Breast epithelium (tissue), 4 donors: ENCODE measurements at regions of chr9 and their contacts with region 1.

Region 1: GRCh38 chr9:126587187-126588185 is 26.2 kb upstream of the LMX1B start:
- DNase-seq: peak; percentile 68 to 80
- H3K4me3 ChIP-seq: no peak overlapping the region
- H3K27ac ChIP-seq: peak overlapping the region; percentile 86 to 88
- H3K4me1 ChIP-seq: peaks cover 0 to under 1% of the 10 kb centered on the region in 2 donors
- H3K27me3 ChIP-seq: no peaks in the 10 kb centered on the region
- CTCF ChIP-seq: no peak
- POLR2A ChIP-seq: no peak

Region 2: DNA sequence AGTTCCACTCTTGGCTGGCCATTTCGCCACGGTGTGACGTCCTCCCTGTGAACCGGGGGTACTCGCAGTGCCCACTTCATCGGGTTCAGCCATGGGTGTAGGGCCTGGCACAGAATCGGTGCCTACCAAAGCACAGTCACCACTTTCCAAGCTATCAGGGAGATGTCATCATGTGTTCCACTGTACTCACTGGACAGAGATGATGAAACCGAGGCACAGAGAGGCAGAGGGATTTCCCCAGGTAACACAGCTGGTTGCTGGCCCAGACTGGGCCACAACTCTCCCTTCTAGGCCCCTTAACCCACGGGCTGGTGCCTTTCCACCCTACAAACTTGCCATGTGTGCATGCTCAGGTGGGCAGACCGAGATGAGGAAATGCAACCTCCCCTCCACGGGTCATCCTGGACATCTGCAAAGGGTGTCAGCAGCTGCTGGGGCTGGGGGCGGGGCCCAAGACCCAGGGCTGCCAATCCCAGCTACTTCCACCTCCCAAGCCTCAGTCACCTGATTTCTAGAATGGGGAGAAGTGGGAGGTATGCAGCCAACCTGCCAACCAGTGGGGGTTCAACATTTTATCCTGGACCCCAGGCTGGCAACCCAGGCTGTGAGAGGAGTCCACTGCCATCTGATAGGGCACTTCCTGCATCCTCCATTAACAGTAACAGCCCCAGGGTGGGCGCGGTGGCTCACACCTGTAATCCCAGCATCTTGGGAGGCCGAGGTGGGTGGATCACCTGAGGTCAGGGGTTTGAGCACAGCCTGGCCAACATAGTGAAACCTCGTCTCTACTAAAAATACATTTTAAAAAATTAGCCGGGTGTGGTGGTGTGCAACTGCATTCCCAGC is 1191.9 kb after region 1 on chr9:
- intact Hi-C with region 1: loop called (anchors 5 kb)
- DNase-seq: no peak
- H3K4me3 ChIP-seq: no peak overlapping the region
- H3K27ac ChIP-seq: peak overlapping the region in 1 of 2 donors; percentile 82
- H3K4me1 ChIP-seq: no peaks in the 10 kb centered on the region
- H3K27me3 ChIP-seq: no peaks in the 10 kb centered on the region
- CTCF ChIP-seq: no peak
- POLR2A ChIP-seq: no peak